Tibial artery (tissue), 4 donors: ENCODE measurements at regions of chr17 and their contacts with region 1.

Region 1: DNA sequence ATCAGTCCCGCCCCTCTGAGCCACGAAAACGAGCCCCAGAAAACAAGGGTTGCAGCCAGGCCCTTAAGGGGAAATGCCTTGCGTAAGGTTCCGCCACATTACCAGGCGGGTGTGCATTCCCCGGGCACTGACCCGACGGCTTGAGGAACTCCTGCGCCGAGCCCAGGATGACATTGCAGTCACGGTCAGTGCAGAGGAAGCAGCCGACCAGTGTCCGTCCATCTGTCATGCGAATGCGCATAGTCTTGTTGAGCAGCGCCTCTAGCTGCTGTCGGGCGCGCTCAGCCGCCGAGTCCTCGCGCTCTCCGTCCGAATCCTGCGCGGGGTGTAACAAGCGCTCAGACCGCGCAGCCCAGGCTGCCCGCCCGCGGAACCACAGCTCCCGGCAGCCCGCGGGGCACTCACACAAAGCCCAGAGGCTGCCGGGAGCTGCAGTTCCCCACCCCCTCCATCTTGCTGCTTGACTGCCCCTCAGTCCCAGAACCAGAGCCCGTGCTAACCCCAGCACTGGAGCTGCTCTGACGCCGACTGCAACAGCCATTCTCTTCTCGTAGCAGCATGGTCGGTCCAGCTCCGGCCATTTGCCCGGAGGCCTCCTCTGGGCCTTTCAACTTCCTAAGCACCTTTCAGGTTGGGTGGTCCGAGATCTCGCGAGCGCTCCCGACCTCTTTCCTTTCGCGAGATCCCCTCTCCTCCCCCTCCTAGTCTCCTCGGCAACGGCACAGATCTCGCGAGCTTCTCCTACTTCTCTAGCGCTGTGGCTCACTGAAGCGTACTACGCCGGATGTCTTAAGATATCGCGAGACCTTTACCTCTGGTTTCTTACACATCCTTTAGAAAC is at the start of gene NAA38:
- DNase-seq: peak; percentile 97 to 99
- H3K4me3 ChIP-seq: peak within 1 kb of the TSS; percentile 66 to 77
- H3K27ac ChIP-seq: peak within 1 kb of the TSS; percentile 89 to 90
- H3K4me1 ChIP-seq: peaks cover 0 to 39% (median 35%) of the 10 kb centered on the region in 4 donors
- H3K27me3 ChIP-seq: no peaks in the 10 kb centered on the region
- CTCF ChIP-seq: peak; percentile 10 to 53

Region 2: GRCh38 chr17:7745748-7746470 is 111.2 kb before region 1 on chr17:
- intact Hi-C with region 1: loop called (anchors 10 kb)
- DNase-seq: peak in 1 of 2 donors; percentile 36
- H3K4me3 ChIP-seq: no peak overlapping the region
- H3K27ac ChIP-seq: no peak overlapping the region
- H3K4me1 ChIP-seq: no peaks in the 10 kb centered on the region
- H3K27me3 ChIP-seq: peaks cover 0 to 47% of the 10 kb centered on the region in 2 donors
- CTCF ChIP-seq: no peak